ENCODE measurements at regions of chr17 and their contacts with region 1.

Region 1: DNA sequence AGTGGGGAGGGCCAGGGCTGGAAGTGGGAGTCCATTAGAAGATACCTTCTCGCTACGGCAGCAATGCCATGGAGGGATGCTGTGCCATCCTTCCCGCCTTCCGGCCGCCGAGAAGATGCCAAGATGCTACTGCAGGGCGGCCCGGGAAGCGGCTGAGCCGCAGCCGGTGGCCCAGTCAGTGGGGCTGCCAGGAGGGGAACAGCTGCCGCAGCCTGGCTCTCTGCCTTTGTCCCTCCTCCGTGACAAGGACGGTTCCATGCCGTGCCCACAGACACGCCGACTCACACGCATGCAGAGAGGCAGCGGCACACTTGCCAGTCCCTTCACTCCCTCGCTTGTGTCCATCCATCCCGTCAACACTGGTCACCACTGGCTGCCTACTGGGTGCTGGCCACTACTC is 20.2 kb upstream of the NCBP3 start:
- DNase-seq: no peak
- H3K4me3 ChIP-seq: no peak overlapping the region
- H3K27ac ChIP-seq: no peak overlapping the region
- H3K4me1 ChIP-seq: peaks cover 0 to 10% (median 7%) of the 10 kb centered on the region in 4 donors
- H3K27me3 ChIP-seq: no peaks in the 10 kb centered on the region
- CTCF ChIP-seq: no peak
- EP300 ChIP-seq: no peak
- POLR2A ChIP-seq: no peak

Region 2: DNA sequence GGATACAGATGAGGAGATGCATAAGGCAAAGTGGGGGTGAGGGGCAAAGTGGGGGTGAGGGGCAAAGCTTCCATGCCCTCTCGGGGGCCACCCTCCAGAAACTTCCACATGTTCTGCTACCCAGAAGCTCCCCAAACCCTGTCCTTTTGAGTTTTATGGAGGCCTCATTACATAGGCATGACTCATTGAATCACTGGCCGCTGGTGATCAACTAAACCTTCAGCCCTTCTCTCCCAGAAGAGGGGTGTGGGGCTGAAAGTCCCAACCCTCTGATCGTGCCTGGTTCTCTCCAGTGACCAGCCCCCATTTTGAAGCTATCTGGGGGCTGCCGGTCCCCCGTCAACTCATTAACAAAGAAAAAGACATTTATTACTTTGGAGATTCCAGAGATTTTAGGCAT is 92.8 kb before region 1 on chr17:
- intact Hi-C with region 1: no loop called
- DNase-seq: no peak
- H3K4me3 ChIP-seq: no peak overlapping the region
- H3K27ac ChIP-seq: no peak overlapping the region
- H3K4me1 ChIP-seq: no peaks in the 10 kb centered on the region
- H3K27me3 ChIP-seq: no peaks in the 10 kb centered on the region
- CTCF ChIP-seq: no peak
- EP300 ChIP-seq: no peak
- POLR2A ChIP-seq: no peak

Region 3: GRCh38 chr17:3913531-3914311 is 47.4 kb after region 1 on chr17:
- intact Hi-C with region 1: loop called (anchors 2 kb)
- DNase-seq: peak; percentile 88
- H3K4me3 ChIP-seq: peak overlapping the region in 2 of 4 donors; percentile 35 to 37
- H3K27ac ChIP-seq: peak overlapping the region; percentile 45 to 75 (median 60)
- H3K4me1 ChIP-seq: peaks cover 0 to 21% (median 9%) of the 10 kb centered on the region in 4 donors
- H3K27me3 ChIP-seq: no peaks in the 10 kb centered on the region
- CTCF ChIP-seq: peak; percentile 86 to 98 (median 96)
- EP300 ChIP-seq: no peak
- POLR2A ChIP-seq: no peak